CD4-positive, alpha-beta T cell (primary cell): ENCODE measurements at regions of chr7 and their contacts with region 1.

Region 1: GRCh38 chr7:155298834-155299534 is 1.3 kb downstream of the INSIG1 start:
- DNase-seq: peak; percentile 89 to 99 (median 94)
- ATAC-seq: peak; percentile 74
- H3K4me3 ChIP-seq: peak overlapping the region; percentile 59
- H3K4me3 Mint-ChIP-seq: peak overlapping the region; percentile 94
- H3K27ac ChIP-seq: peak overlapping the region; percentile 84 to 91
- H3K27ac Mint-ChIP-seq: peak overlapping the region; percentile 89
- H3K4me1 ChIP-seq: peaks cover 39% of the 10 kb centered on the region
- H3K4me1 Mint-ChIP-seq: peaks cover 41% of the 10 kb centered on the region
- H3K27me3 ChIP-seq: no peaks in the 10 kb centered on the region
- H3K27me3 Mint-ChIP-seq: no peaks in the 10 kb centered on the region
- CTCF ChIP-seq: no peak

Region 2: DNA sequence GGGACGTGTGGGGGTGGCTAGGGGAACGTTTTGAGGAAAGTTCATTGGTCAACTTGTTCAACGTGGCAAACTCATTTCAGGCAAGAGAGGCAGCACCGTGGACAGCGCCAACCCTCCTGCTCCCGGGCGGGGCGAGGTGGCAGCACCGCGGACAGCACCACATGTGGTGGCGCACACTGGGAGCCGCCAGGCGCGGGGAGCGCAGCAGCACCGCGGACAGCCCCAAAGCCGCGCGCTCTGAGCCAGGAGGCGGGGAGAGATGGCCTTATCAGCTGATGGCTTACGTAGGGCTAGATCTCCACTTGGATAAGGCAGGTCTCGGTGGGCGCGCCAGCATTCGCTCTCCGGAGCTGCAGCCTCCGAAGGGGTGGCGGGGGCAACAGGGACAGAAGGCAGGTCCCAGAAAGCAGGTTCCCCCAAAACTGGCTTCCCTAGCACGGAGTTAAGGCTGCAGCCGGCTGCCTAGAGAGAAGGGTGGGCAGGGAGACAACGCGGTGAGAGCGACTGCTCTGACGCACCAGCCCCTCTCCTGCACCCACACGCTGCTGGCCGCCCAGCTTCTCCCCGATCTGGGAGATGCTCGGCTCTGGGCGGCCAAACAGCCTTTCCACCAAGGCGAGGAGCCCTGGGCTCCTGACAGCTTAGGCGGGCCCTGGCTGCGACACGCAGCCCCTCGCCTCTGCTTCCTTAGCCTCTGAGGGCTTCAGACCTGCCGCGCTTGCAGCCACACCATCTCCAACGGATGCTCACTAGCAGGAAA is 228.8 kb before region 1 on chr7 and contains the start of gene HTR5A:
- CTCF ChIA-PET with region 1: no interaction called
- POLR2A ChIA-PET with region 1: no interaction called
- intact Hi-C with region 1: loop called in 1 of 2 experiments (anchors 5 kb)
- DNase-seq: peak; percentile 48 to 88 (median 74)
- ATAC-seq: peak; percentile 100
- H3K4me3 ChIP-seq: no peak within 1 kb of the TSS
- H3K4me3 Mint-ChIP-seq: no peak within 1 kb of the TSS
- H3K27ac ChIP-seq: no peak within 1 kb of the TSS
- H3K27ac Mint-ChIP-seq: no peak within 1 kb of the TSS
- H3K4me1 ChIP-seq: peaks cover 7% of the 10 kb centered on the region
- H3K4me1 Mint-ChIP-seq: no peaks in the 10 kb centered on the region
- H3K27me3 ChIP-seq: peaks cover 25 to 37% of the 10 kb centered on the region in 2 experiments
- H3K27me3 Mint-ChIP-seq: peaks cover 70% of the 10 kb centered on the region
- CTCF ChIP-seq: no peak
- total RNA-seq, gene HTR5A: not detected

Region 3: GRCh38 chr7:155205368-155206317 is 93.3 kb before region 1 on chr7:
- CTCF ChIA-PET with region 1: interaction called, 7 read pairs
- POLR2A ChIA-PET with region 1: interaction called, 114 read pairs
- intact Hi-C with region 1: loop called (anchors 1 kb)
- DNase-seq: peak; percentile 67 to 98 (median 81)
- ATAC-seq: peak; percentile 91
- H3K4me3 ChIP-seq: peak overlapping the region; percentile 69
- H3K4me3 Mint-ChIP-seq: peak overlapping the region; percentile 91
- H3K27ac ChIP-seq: peak overlapping the region; percentile 67 to 93
- H3K27ac Mint-ChIP-seq: peak overlapping the region; percentile 93
- H3K4me1 ChIP-seq: peaks cover 29% of the 10 kb centered on the region
- H3K4me1 Mint-ChIP-seq: peaks cover 22% of the 10 kb centered on the region
- H3K27me3 ChIP-seq: no peaks in the 10 kb centered on the region
- H3K27me3 Mint-ChIP-seq: no peaks in the 10 kb centered on the region
- CTCF ChIP-seq: no peak

Region 4: GRCh38 chr7:155252444-155252887 is 46.5 kb before region 1 on chr7:
- CTCF ChIA-PET with region 1: no interaction called
- POLR2A ChIA-PET with region 1: no interaction called
- intact Hi-C with region 1: no loop called
- DNase-seq: no peak
- ATAC-seq: no peak
- H3K4me3 ChIP-seq: no peak overlapping the region
- H3K4me3 Mint-ChIP-seq: no peak overlapping the region
- H3K27ac ChIP-seq: no peak overlapping the region
- H3K27ac Mint-ChIP-seq: no peak overlapping the region
- H3K4me1 ChIP-seq: no peaks in the 10 kb centered on the region
- H3K4me1 Mint-ChIP-seq: no peaks in the 10 kb centered on the region
- H3K27me3 ChIP-seq: no peaks in the 10 kb centered on the region
- H3K27me3 Mint-ChIP-seq: peaks cover 4% of the 10 kb centered on the region
- CTCF ChIP-seq: no peak

Region 5: GRCh38 chr7:155644178-155644970 is 345.4 kb after region 1 on chr7 and contains the start of gene RBM33:
- CTCF ChIA-PET with region 1: no interaction called
- POLR2A ChIA-PET with region 1: interaction called, 19 read pairs
- intact Hi-C with region 1: loop called in 1 of 2 experiments (anchors 5 kb)
- DNase-seq: peak; percentile 53 to 87 (median 69)
- ATAC-seq: peak; percentile 81
- H3K4me3 ChIP-seq: peak within 1 kb of the TSS; percentile 79
- H3K4me3 Mint-ChIP-seq: peak within 1 kb of the TSS; percentile 99
- H3K27ac ChIP-seq: peak within 1 kb of the TSS; percentile 83 to 94
- H3K27ac Mint-ChIP-seq: peak within 1 kb of the TSS; percentile 94
- H3K4me1 ChIP-seq: peaks cover 22% of the 10 kb centered on the region
- H3K4me1 Mint-ChIP-seq: peaks cover 62% of the 10 kb centered on the region
- H3K27me3 ChIP-seq: no peaks in the 10 kb centered on the region
- H3K27me3 Mint-ChIP-seq: no peaks in the 10 kb centered on the region
- CTCF ChIP-seq: no peak
- total RNA-seq, gene RBM33: 178 to 184 TPM

Region 6: DNA sequence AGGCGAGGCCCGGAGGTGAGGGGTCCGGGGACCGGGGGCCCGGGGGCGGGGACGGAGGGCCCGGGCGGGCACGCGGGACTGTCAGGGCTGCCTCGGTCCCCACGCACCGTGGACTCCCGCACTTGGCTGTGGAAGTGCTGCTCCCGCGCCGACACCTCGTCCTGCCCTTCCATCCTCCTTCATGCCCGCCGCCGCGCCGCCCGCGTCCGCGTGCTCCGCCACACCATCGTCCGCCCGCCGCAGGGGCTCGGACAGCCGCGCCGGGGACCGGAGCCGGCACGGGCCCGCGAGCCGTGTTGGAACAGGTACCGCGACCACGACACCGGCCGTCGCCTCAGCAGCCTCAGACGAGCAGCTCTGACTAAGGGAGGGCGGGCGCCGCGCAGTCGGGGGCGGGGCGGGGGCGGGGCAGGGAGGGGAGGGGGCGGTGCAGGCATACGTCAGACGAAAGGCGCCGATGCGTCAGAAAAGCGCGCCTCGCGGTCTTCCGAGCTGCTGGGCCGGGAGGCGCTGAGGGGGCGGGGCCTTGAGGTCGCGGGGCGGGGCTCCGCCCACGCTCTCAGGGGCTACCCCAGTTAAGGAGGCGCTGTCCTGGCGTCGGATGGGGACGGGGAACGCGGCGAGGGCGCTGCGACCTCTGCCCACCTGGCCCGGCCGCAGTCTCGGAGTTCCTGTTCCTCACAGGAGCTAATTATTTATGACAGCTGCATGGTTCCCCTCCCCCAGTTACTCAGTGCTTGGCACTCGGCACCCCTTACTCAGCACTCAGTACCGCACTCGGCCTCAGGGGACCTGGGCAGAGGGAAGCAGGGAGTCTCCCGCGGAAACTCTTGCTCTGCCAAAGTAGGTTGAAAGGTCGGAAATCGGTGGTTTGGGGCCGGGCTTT is 1594.1 kb after region 1 on chr7 and contains the start of gene LMBR1:
- CTCF ChIA-PET with region 1: no interaction called
- POLR2A ChIA-PET with region 1: no interaction called
- intact Hi-C with region 1: loop called in 1 of 2 experiments (anchors 10 kb)
- DNase-seq: peak; percentile 91 to 98 (median 94)
- ATAC-seq: peak; percentile 80
- H3K4me3 ChIP-seq: peak within 1 kb of the TSS; percentile 77
- H3K4me3 Mint-ChIP-seq: peak within 1 kb of the TSS; percentile 96
- H3K27ac ChIP-seq: peak within 1 kb of the TSS; percentile 73 to 83
- H3K27ac Mint-ChIP-seq: peak within 1 kb of the TSS; percentile 93
- H3K4me1 ChIP-seq: peaks cover 24% of the 10 kb centered on the region
- H3K4me1 Mint-ChIP-seq: peaks cover 54% of the 10 kb centered on the region
- H3K27me3 ChIP-seq: no peaks in the 10 kb centered on the region
- H3K27me3 Mint-ChIP-seq: no peaks in the 10 kb centered on the region
- CTCF ChIP-seq: peak; percentile 72
- total RNA-seq, gene LMBR1: 61.6 to 61.9 TPM